Mammary epithelial cell (primary cell): ENCODE measurements at regions of chr10 and their contacts with region 1.

Region 1: GRCh38 chr10:28043941-28044340 is 45.1 kb upstream of the ODAD2 start:
- DNase-seq: no peak
- H3K4me3 ChIP-seq: no peak overlapping the region
- H3K27ac ChIP-seq: no peak overlapping the region
- H3K4me1 ChIP-seq: no peaks in the 10 kb centered on the region
- H3K27me3 ChIP-seq: no peaks in the 10 kb centered on the region
- CTCF ChIP-seq: no peak

Region 2: DNA sequence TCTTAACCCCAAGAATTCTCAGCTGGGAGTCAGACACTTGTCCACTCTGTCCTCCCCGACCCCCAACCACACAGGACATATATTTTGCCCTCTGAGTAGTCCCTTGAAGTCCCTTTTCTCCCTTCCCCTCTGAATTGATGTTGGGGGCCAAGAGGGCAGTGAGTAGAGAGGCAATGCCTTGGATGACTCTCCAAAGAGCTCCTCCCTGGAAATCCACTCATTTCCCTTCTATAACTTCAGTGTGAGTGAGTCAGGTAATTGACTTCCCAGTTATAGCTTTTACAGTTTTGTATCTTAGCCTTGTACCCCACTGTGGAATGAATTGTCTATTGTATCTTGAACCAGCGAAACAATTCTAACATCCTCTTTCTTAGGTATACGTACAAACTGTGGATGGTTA is 35.9 kb before region 1 on chr10:
- CTCF ChIA-PET with region 1: no interaction called
- dilution Hi-C with region 1: loop called (anchors 5 kb)
- in situ Hi-C with region 1: no loop called
- intact Hi-C with region 1: no loop called
- DNase-seq: no peak
- H3K4me3 ChIP-seq: no peak overlapping the region
- H3K27ac ChIP-seq: no peak overlapping the region
- H3K4me1 ChIP-seq: no peaks in the 10 kb centered on the region
- H3K27me3 ChIP-seq: no peaks in the 10 kb centered on the region
- CTCF ChIP-seq: no peak